Posterior vena cava (tissue), 2 donors: ENCODE measurements at regions of chr1 and their contacts with region 1.

Region 1: DNA sequence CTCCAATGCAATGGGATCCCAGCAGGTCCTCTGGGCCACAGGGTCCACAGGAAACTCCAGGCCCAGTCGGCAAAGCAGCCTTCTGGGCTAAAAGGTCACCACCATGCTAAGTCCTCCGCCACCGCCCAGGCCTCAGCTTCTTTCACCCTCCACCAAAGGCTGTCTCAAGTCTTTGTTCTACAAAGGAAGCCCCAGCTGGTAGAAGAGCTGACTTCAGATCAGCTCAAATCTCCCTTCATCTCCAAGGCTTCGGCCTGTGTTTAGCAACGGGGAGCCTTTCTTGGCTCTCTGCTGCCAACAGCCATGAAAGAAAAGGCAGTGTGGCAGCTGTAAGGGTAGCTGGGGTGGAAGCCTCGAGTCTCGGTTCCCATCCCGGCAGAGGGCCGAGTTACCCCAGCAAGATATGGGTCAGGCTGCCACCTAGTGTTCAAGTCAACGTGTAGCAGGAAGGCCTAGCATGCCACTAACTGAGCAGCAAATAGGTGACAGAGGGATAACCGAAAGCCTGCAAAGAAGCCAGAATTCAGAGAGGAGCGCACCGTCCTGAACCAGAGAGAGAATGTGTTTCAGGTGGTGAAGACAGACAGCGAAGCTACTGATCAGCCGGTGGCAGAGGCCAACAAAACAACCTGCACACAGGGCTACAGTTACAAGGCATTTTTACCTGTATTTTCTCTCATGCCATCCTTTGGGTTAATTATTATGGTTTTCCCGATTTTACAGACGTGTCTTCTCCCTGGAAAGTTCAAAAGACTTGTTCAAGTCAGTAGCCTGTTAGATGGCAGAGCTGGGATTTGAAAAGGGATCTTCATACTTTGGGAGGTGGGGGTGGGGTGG is 26.8 kb upstream of the CRNN start:
- DNase-seq: peak; percentile 86

Region 2: GRCh38 chr1:151989211-151989862 is 451.5 kb before region 1 on chr1:
- intact Hi-C with region 1: no loop called
- DNase-seq: peak; percentile 93

Region 3: GRCh38 chr1:152052606-152053005 is 388.2 kb before region 1 on chr1:
- intact Hi-C with region 1: loop called in 1 of 2 experiments (anchors 5 kb)
- DNase-seq: peak; percentile 96

Region 4: GRCh38 chr1:152061952-152062351 is 378.9 kb before region 1 on chr1:
- intact Hi-C with region 1: loop called in 1 of 2 experiments (anchors 10 kb)
- DNase-seq: no peak

Region 5: DNA sequence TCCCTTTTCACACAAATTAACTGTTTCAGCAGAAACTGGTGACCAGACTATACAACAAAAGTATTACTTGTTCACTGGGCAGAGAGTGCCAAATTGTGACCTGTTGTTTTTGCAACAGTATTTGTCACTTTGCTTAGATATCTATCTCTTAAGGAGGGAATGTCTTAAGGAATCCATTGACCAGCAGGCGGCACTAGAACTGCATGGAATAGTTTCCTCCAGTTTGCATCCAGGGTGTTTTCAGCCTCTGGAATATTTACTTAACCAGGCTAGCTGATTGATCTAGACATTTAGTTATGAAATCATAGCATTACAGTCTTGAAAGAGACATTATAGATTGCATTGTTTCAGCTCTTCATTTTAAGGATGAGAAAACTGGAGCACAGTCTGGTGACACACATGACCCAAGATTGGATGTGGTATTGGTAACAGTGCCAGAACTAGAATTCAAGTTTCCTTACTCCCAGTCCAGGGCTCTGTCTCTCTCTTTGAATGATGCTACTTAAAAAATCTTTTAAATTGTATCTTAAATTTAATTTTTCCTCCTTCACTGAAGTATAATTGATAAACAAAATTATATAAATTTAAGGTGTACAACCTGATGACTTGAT is 298.8 kb before region 1 on chr1:
- intact Hi-C with region 1: loop called in 1 of 2 experiments (anchors 10 kb)
- DNase-seq: no peak

Region 6: DNA sequence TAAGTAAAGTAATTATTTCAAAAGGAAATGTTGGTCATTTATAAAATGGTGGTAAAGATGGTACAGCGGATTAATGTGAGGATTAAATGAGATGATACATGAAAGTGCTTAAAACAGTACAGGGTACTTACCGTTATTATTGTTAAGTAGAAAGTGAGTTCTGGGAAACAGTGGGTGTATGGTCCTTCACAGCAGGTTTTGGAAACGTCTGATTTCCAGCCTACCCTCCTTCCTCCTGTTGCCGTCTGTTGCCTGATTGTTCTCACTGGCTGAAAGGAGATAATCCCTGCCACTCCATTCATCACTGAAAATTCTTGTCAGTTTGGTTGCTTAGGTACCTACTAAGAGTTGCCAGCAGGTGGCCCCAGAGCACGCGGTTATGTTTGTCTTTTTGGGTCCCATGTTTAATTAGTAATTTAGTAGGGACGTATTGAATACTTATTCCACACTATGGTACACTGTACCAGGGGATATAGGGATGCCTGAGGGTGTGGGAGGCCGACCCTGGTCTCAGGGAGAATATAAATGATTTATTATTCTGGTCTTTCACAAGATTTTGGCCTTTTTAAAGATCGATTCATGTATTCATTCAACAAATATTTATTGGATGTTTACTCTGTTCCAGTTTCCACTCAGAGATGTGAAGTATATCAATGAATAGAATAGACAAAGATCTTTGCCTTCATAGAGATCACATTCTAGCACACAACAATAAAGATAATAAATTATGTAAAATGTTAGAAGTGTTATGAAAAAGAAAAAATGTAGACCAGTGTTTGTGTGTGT is 251.0 kb before region 1 on chr1:
- intact Hi-C with region 1: loop called in 1 of 2 experiments (anchors 5 kb)
- DNase-seq: peak; percentile 80